ENCODE measurements at regions of chr3 and their contacts with region 1.

Region 1: GRCh38 chr3:190224863-190225692 is 97.2 kb downstream of the CLDN1 start:
- DNase-seq: peak; percentile 11
- H3K4me3 ChIP-seq: no peak overlapping the region
- H3K27me3 ChIP-seq: no peaks in the 10 kb centered on the region
- CTCF ChIP-seq: peak; percentile 57

Region 2: GRCh38 chr3:190008432-190008831 is 216.6 kb before region 1 on chr3:
- CTCF ChIA-PET with region 1: no interaction called
- POLR2A ChIA-PET with region 1: no interaction called
- DNase-seq: no peak
- H3K4me3 ChIP-seq: no peak overlapping the region
- H3K27me3 ChIP-seq: no peaks in the 10 kb centered on the region
- CTCF ChIP-seq: no peak

Region 3: GRCh38 chr3:190424478-190425439 is 199.7 kb after region 1 on chr3:
- CTCF ChIA-PET with region 1: interaction called, 41 read pairs
- POLR2A ChIA-PET with region 1: no interaction called
- DNase-seq: no peak
- H3K4me3 ChIP-seq: no peak overlapping the region
- H3K27me3 ChIP-seq: no peaks in the 10 kb centered on the region
- CTCF ChIP-seq: peak; percentile 67